ENCODE measurements at regions of chr12 and their contacts with region 1.

Region 1: GRCh38 chr12:44795970-44796369 is 80.1 kb downstream of the NELL2 start:
- DNase-seq: no peak
- H3K4me3 ChIP-seq: no peak overlapping the region
- H3K27ac ChIP-seq: no peak overlapping the region
- H3K4me1 ChIP-seq: no peaks in the 10 kb centered on the region
- H3K27me3 ChIP-seq: no peaks in the 10 kb centered on the region
- CTCF ChIP-seq: no peak
- EP300 ChIP-seq: no peak
- POLR2A ChIP-seq: no peak

Region 2: GRCh38 chr12:45008211-45008610 is 212.2 kb after region 1 on chr12:
- in situ Hi-C with region 1: no loop called
- intact Hi-C with region 1: loop called (anchors 5 kb)
- DNase-seq: no peak
- H3K4me3 ChIP-seq: no peak overlapping the region
- H3K27ac ChIP-seq: no peak overlapping the region
- H3K4me1 ChIP-seq: no peaks in the 10 kb centered on the region
- H3K27me3 ChIP-seq: no peaks in the 10 kb centered on the region
- CTCF ChIP-seq: no peak
- EP300 ChIP-seq: no peak
- POLR2A ChIP-seq: no peak

Measured in transverse colon (tissue), 4 donors.